ENCODE measurements at regions of chr17 and their contacts with region 1.

Region 1: DNA sequence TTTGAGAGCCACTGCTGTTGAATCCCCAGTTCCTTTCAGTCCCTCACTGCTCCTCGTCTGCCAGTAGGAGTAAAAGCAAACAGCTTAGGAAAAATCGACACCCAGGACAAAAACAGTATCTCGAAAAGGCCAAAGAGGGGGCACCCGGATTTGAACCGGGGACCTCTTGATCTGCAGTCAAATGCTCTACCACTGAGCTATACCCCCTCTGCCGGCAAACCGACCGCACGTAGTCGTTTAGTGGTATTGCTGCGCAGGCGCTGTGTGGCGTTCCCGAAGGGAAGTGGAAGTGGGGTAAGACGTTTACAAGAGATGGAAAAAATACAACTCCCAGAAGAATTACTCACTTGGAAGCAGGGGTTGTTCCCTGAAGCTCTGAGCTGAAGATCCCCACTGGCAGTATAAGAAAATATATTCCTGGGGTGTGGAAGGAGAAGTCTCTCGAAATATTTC is 2.2 kb upstream of the PLXDC1 start:
- DNase-seq: peak; percentile 96
- H3K4me3 Mint-ChIP-seq: peak overlapping the region; percentile 94
- H3K27ac Mint-ChIP-seq: peak overlapping the region; percentile 90
- H3K4me1 Mint-ChIP-seq: peaks cover 30% of the 10 kb centered on the region
- H3K27me3 Mint-ChIP-seq: peaks cover 8% of the 10 kb centered on the region

Region 2: DNA sequence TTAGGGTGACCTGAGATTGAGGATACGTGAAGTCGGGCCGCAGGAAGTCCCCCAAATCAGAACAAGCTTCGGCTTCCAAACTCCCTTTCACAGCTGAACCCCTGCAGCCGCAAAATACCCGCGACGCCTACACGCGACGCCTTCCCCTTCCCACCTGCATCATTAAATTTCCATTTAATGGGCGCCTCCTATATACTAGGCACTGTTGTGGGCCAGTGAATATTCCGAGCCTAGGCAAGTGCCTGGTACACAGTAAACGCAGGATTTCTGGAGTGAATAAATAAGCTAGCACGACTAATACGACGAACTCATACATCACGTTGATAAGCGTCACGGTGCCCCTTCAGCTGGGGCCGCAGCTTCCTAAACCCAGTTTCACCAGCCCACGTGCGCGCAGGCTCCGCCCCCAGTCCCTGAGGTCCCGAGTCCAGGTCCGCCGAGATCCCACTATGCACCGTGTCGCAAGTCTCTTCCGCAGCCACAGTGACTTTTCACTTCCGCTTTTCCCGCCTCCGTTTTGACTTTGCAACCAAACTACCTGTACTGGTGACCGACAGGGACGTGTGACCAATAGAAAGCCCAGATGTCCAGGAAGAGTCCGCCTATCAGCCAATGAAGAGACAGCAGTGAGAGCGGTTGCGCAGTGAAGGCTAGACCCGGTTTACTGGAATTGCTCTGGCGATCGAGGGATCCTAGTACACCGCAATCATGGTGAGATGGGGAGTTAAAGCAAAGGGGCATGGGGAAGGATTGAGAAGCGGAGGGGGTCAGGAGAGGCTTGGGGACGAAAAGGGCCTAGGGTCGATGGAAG is 401.3 kb before region 1 on chr17 and contains the start of gene PSMB3:
- CTCF ChIA-PET with region 1: interaction called, 4 read pairs
- POLR2A ChIA-PET with region 1: no interaction called
- intact Hi-C with region 1: loop called (anchors 1 kb)
- DNase-seq: peak; percentile 99
- H3K4me3 Mint-ChIP-seq: peak within 1 kb of the TSS; percentile 92
- H3K27ac Mint-ChIP-seq: peak within 1 kb of the TSS; percentile 94
- H3K4me1 Mint-ChIP-seq: peaks cover 40% of the 10 kb centered on the region
- H3K27me3 Mint-ChIP-seq: peaks cover 27% of the 10 kb centered on the region
- total RNA-seq, gene PSMB3: 335 to 348 TPM

Region 3: DNA sequence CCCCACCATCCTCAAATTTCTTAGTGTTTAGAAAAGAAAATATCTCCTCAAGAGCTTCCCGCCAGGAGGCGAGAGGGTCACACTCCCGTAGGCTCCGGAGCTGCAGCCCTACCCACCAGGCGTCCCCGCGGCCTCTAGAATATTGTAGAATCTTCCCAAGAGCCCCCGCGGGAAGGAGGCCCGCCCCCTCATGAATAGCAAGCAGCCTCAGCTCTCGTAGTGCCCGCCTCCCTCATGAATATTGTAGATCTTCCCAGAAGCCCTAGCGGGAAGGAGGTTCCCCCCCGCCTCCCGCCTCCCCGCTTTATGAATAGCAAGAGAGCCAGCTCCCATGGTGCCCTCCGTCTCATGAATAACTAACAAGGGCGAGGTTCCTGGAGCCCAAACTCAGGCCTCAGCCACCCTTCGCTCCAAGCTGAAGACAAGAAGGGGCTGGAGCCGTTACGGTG is 186.3 kb before region 1 on chr17 and contains the start of gene FBXO47:
- CTCF ChIA-PET with region 1: interaction called, 4 read pairs
- POLR2A ChIA-PET with region 1: no interaction called
- intact Hi-C with region 1: loop called (anchors 5 kb)
- DNase-seq: peak; percentile 91
- H3K4me3 Mint-ChIP-seq: peak within 1 kb of the TSS; percentile 73
- H3K27ac Mint-ChIP-seq: peak within 1 kb of the TSS; percentile 77
- H3K4me1 Mint-ChIP-seq: peaks cover 13% of the 10 kb centered on the region
- H3K27me3 Mint-ChIP-seq: no peaks in the 10 kb centered on the region
- total RNA-seq, gene FBXO47: not detected

Region 4: GRCh38 chr17:39057701-39058206 is 95.9 kb before region 1 on chr17:
- CTCF ChIA-PET with region 1: interaction called, 11 read pairs
- POLR2A ChIA-PET with region 1: interaction called, 3 read pairs
- intact Hi-C with region 1: loop called (anchors 1 kb)
- DNase-seq: no peak
- H3K4me3 Mint-ChIP-seq: peak overlapping the region; percentile 77
- H3K27ac Mint-ChIP-seq: no peak overlapping the region
- H3K4me1 Mint-ChIP-seq: peaks cover 10% of the 10 kb centered on the region
- H3K27me3 Mint-ChIP-seq: no peaks in the 10 kb centered on the region

Region 5: GRCh38 chr17:39164675-39165143 is 11.1 kb after region 1 on chr17:
- CTCF ChIA-PET with region 1: interaction called, 124 read pairs
- POLR2A ChIA-PET with region 1: interaction called, 7 read pairs
- intact Hi-C with region 1: no loop called
- DNase-seq: peak; percentile 83
- H3K4me3 Mint-ChIP-seq: peak overlapping the region; percentile 84
- H3K27ac Mint-ChIP-seq: no peak overlapping the region
- H3K4me1 Mint-ChIP-seq: peaks cover 14% of the 10 kb centered on the region
- H3K27me3 Mint-ChIP-seq: peaks cover 37% of the 10 kb centered on the region

Region 6: GRCh38 chr17:39235555-39236449 is 82.2 kb after region 1 on chr17:
- CTCF ChIA-PET with region 1: interaction called, 6 read pairs
- POLR2A ChIA-PET with region 1: interaction called, 3 read pairs
- intact Hi-C with region 1: loop called (anchors 5 kb)
- DNase-seq: peak; percentile 73
- H3K4me3 Mint-ChIP-seq: no peak overlapping the region
- H3K27ac Mint-ChIP-seq: no peak overlapping the region
- H3K4me1 Mint-ChIP-seq: peaks cover 29% of the 10 kb centered on the region
- H3K27me3 Mint-ChIP-seq: peaks cover 11% of the 10 kb centered on the region